ENCODE measurements at regions of chr7 and their contacts with region 1.

Region 1: GRCh38 chr7:100215895-100216294 is 3.9 kb upstream of the PVRIG start:
- DNase-seq: peak; percentile 85
- H3K4me3 ChIP-seq: no peak overlapping the region
- H3K27ac ChIP-seq: peak overlapping the region in 2 of 4 donors; percentile 27 to 41
- H3K4me1 ChIP-seq: no peaks in the 10 kb centered on the region
- H3K27me3 ChIP-seq: no peaks in the 10 kb centered on the region
- CTCF ChIP-seq: no peak
- EP300 ChIP-seq: no peak
- POLR2A ChIP-seq: no peak

Region 2: DNA sequence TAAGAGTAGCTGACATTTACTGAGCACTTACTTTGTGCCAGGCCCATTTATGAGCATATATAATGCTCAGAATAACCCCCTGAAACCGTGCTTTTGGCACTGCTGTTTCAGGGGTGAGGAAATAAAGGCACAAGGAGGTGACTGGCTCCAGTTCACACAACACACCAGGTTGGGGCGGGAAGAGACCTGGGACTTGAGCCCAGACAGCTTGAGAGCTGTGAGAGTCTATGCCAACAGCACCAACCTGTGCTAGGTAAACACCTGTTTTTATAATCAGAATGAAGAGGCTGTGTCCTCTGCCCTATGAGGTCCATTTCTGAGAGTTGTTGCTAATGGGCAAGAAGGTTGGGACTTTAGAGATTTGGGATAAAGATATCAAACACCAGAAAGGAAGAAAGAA is 231.3 kb before region 1 on chr7:
- intact Hi-C with region 1: loop called (anchors 10 kb)
- DNase-seq: no peak
- H3K4me3 ChIP-seq: no peak overlapping the region
- H3K27ac ChIP-seq: no peak overlapping the region
- H3K4me1 ChIP-seq: no peaks in the 10 kb centered on the region
- H3K27me3 ChIP-seq: no peaks in the 10 kb centered on the region
- CTCF ChIP-seq: no peak
- EP300 ChIP-seq: no peak
- POLR2A ChIP-seq: no peak

Region 3: GRCh38 chr7:100132697-100133151 is 83.2 kb before region 1 on chr7:
- intact Hi-C with region 1: loop called (anchors 2 kb)
- DNase-seq: no peak
- H3K4me3 ChIP-seq: no peak overlapping the region
- H3K27ac ChIP-seq: no peak overlapping the region
- H3K4me1 ChIP-seq: peaks cover 0 to 22% (median 11%) of the 10 kb centered on the region in 4 donors
- H3K27me3 ChIP-seq: no peaks in the 10 kb centered on the region
- CTCF ChIP-seq: peak; percentile 85 to 89 (median 86)
- EP300 ChIP-seq: no peak
- POLR2A ChIP-seq: no peak

Measured in sigmoid colon (tissue), 7 donors.